Activated naive CD4-positive, alpha-beta T cell treated with anti-CD3 and anti-CD28 coated beads for 36 hours (primary cell): ENCODE measurements at regions of chr1 and their contacts with region 1.

Region 1: GRCh38 chr1:101357444-101357986 is 120.7 kb downstream of the S1PR1 start:
- DNase-seq: peak; percentile 85
- H3K4me3 Mint-ChIP-seq: no peak overlapping the region
- H3K27ac Mint-ChIP-seq: no peak overlapping the region
- H3K4me1 Mint-ChIP-seq: peaks cover 7% of the 10 kb centered on the region
- H3K27me3 Mint-ChIP-seq: no peaks in the 10 kb centered on the region

Region 2: GRCh38 chr1:100423832-100424337 is 933.6 kb before region 1 on chr1:
- CTCF ChIA-PET with region 1: no interaction called
- intact Hi-C with region 1: no loop called
- DNase-seq: no peak
- H3K4me3 Mint-ChIP-seq: peak overlapping the region; percentile 36
- H3K27ac Mint-ChIP-seq: peak overlapping the region; percentile 59
- H3K4me1 Mint-ChIP-seq: peaks cover 63% of the 10 kb centered on the region
- H3K27me3 Mint-ChIP-seq: no peaks in the 10 kb centered on the region

Region 3: DNA sequence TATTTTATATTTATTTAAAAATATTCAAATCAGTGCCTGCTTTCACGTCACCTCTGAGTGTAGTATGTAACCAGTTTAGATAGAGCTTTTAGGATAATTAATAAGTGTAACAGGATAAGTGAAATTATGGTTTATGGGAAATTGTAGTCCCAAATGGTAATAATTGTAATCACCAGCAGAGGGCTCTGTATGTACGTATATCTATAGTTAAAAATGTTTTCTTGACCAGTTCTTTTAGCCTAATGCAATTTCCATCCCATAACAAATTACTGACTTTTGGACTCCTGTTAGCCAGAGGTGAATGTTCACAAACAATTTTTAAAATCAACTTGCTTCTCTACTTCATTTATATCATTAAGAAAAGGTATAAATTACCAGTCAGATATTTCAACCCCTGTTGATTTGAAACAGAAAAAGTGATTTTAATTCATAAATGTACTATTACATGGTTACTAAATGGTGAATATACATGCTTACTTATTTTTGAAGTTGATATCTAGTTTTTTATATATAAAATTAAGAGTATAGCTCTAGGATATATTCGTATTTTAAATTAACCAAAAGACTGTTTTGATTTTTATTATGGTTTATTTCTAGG is 436.3 kb before region 1 on chr1:
- CTCF ChIA-PET with region 1: interaction called, 4 read pairs
- intact Hi-C with region 1: loop called (anchors 1 kb)
- DNase-seq: no peak
- H3K4me3 Mint-ChIP-seq: no peak overlapping the region
- H3K27ac Mint-ChIP-seq: peak overlapping the region; percentile 39
- H3K4me1 Mint-ChIP-seq: peaks cover 16% of the 10 kb centered on the region
- H3K27me3 Mint-ChIP-seq: no peaks in the 10 kb centered on the region

Region 4: DNA sequence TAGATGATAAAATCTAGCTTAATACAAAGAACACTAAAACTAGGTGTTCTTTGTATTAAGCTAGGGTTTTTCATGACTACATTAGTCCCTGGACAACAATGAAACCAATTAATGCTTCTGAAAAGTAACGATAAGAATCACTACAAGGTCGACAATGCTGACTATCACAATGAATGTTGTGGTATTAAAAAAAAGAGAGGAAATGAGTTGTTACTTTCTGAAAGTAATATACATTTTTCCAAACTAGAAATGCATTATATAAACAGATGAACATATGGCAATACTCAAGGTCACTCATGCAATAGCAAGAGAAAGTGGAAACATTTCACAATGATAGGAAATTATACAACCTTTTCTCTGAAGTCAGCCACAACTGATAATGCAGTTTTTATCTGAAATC is 351.0 kb before region 1 on chr1:
- CTCF ChIA-PET with region 1: no interaction called
- intact Hi-C with region 1: no loop called
- DNase-seq: no peak
- H3K4me3 Mint-ChIP-seq: no peak overlapping the region
- H3K27ac Mint-ChIP-seq: peak overlapping the region; percentile 58
- H3K4me1 Mint-ChIP-seq: peaks cover 50% of the 10 kb centered on the region
- H3K27me3 Mint-ChIP-seq: no peaks in the 10 kb centered on the region

Region 5: DNA sequence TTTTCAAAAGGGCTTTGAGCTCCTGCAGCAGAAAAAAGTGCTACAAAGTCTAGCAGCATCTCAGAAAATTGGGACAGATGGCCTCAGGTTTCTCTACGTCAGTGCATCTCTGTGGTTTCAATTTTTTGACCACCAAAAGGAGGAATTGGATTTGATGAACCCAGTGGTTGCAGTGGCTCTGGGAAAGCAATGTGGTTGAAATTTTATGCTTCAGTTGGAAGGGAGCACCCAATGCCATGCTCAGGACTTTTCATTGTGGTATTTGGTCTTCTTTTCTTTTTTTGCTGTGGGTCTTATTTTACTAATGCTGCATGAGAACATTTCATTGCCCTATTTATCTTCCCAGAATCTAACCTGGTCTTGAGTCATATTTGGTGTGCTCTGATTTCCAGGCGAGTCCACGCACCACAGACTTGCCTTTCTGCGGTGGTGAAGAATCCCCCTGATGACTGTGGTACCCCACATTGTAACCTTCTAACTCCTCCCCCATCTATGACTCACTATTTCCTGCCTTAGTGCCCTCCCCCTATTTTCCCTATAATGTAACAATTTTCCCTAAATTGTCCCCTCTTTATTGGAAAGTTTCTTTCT is 64.0 kb before region 1 on chr1:
- CTCF ChIA-PET with region 1: interaction called, 19 read pairs
- intact Hi-C with region 1: loop called (anchors 1 kb)
- DNase-seq: peak; percentile 84
- H3K4me3 Mint-ChIP-seq: peak overlapping the region; percentile 0
- H3K27ac Mint-ChIP-seq: peak overlapping the region; percentile 79
- H3K4me1 Mint-ChIP-seq: peaks cover 68% of the 10 kb centered on the region
- H3K27me3 Mint-ChIP-seq: no peaks in the 10 kb centered on the region

Region 6: DNA sequence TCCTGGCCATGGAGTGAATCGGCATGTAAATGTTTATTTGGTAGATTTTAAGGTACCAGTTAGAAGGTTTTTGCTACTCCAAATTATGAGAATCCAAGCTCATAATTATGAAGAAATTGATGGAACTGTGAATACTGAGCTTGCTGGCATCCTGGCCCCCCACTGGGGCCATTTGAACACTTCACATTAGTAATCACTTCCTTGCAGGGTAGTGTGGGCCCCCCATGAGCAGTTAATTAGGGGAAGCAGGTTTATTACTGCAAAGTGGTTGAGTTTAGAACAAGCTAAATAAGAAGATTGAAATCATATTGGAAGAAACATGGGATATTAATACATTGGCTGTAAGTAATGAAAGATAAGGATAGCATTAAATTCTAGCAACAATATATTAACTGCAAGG is 34.0 kb before region 1 on chr1:
- CTCF ChIA-PET with region 1: interaction called, 18 read pairs
- intact Hi-C with region 1: no loop called
- DNase-seq: no peak
- H3K4me3 Mint-ChIP-seq: no peak overlapping the region
- H3K27ac Mint-ChIP-seq: no peak overlapping the region
- H3K4me1 Mint-ChIP-seq: no peaks in the 10 kb centered on the region
- H3K27me3 Mint-ChIP-seq: no peaks in the 10 kb centered on the region